ENCODE measurements at regions of chr12 and their contacts with region 1.

Region 1: DNA sequence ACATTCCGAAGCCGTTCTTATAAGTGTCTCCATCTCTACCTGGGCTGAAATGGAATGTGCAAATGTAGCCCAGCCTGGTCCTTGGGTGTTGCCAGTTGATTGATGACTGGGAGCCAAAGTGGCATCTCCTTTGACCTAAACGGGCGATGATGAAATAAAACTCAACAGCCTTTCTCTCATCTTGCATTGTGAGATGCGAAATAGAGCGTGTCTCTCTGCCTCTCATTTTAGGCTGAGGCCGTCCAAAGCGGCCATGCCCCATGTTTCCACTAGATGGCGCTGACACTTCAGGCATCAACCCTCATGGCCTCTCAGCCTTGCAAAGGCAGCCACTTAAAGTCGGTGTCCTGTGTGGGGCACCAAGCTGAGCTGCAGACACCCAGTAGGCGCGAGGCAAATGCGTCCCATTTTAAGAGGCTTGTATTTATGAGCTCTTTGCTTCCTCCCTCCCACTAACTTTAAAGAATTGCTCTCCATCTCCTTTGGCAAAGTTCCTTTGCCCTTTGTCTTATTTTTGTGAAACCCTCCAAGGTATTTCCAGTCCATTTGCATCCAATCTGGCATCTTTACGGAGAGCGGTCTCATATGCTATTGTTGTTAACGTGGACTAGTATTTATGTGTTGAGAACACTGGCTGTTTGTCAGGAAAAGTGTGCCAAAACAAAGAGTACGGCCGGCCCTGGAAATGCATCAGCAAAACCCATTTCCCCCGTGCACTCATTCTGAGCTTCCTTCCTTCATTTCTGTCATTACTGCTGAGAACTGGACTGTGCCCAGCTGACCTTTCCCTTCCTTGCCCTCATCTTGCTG is 25.0 kb downstream of the GPRC5A start:
- DNase-seq: peak; percentile 72 to 87 (median 81)
- ATAC-seq: peak; percentile 99
- H3K4me3 ChIP-seq: no peak overlapping the region
- H3K4me3 Mint-ChIP-seq: peak overlapping the region in 7 of 10 donors; percentile 2 to 63 (median 40)
- H3K27ac ChIP-seq: no peak overlapping the region
- H3K27ac Mint-ChIP-seq: peak overlapping the region in 4 of 9 donors; percentile 6 to 55 (median 12)
- H3K4me1 ChIP-seq: peaks cover 0 to 3% of the 10 kb centered on the region in 2 donors
- H3K4me1 Mint-ChIP-seq: peaks cover 9 to 17% (median 11%) of the 10 kb centered on the region in 7 donors
- H3K27me3 ChIP-seq: no peaks in the 10 kb centered on the region
- H3K27me3 Mint-ChIP-seq: peaks cover 0 to 30% (median 10%) of the 10 kb centered on the region in 5 donors

Region 2: DNA sequence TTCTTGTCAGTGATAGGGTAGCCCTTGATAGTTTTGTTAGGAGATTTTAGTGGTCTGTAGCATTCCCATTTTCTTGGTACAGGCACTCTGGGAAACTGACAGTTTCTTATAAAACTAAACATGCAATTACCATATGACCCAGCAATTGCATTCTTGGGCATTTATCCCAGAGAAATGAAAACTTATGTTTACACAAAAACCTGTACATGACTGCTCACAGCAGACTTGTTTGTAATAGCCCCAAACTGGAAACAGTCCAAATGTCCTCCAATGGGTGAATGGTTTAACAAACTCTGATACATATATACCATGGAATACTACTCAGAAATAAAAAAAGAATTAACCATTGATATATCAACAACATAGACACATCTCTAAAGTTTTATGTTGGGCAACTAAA is 484.0 kb before region 1 on chr12:
- CTCF ChIA-PET with region 1: no interaction called
- POLR2A ChIA-PET with region 1: no interaction called
- intact Hi-C with region 1: no loop called
- DNase-seq: no peak
- ATAC-seq: no peak
- H3K4me3 ChIP-seq: no peak overlapping the region
- H3K4me3 Mint-ChIP-seq: no peak overlapping the region
- H3K27ac ChIP-seq: no peak overlapping the region
- H3K27ac Mint-ChIP-seq: peak overlapping the region in 3 of 9 donors; percentile 22 to 76 (median 65)
- H3K4me1 ChIP-seq: peaks cover 0 to 8% of the 10 kb centered on the region in 2 donors
- H3K4me1 Mint-ChIP-seq: peaks cover 10 to 35% (median 17%) of the 10 kb centered on the region in 7 donors
- H3K27me3 ChIP-seq: no peaks in the 10 kb centered on the region
- H3K27me3 Mint-ChIP-seq: no peaks in the 10 kb centered on the region

Region 3: DNA sequence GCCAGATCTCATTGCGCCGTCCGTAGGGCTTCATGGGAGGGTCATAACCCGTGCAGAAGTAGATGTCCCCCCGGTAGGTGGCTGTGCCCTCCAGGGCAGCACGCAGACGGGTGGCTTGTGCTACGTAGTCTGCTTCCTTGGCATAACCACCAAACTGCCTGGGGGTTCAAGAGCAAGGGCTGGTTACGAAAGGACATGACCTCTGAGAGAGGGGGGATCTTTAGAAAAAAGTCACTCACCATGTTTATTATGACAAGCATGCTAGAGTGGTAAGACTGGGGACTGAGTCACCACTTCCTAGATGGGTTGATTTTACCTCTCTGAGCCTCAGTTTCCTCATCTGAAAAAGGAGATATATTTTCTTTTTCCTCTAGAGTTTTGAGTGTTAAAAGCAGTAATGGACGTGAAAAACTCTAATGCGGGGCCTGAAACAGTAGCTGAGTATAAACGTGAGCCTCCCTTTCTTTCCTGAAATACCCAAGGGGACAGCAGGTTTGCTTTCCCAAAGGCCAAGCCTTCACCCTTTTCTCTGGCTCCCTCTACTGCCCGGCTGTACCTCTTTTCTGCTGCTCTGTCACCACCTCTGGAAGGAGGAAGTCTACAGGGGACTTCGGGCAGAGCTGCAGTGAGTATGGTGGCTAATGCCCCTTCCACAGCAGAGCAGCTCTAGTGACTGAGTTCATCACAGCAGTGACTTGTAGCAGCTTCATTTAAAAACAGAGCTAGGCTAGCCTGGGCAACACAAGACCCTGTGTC is 59.2 kb after region 1 on chr12:
- CTCF ChIA-PET with region 1: interaction called, 5 read pairs
- POLR2A ChIA-PET with region 1: no interaction called
- intact Hi-C with region 1: loop called in 1 of 2 experiments (anchors 2 kb)
- DNase-seq: no peak
- ATAC-seq: peak; percentile 46
- H3K4me3 ChIP-seq: no peak overlapping the region
- H3K4me3 Mint-ChIP-seq: no peak overlapping the region
- H3K27ac ChIP-seq: no peak overlapping the region
- H3K27ac Mint-ChIP-seq: peak overlapping the region in 1 of 9 donors; percentile 12
- H3K4me1 ChIP-seq: no peaks in the 10 kb centered on the region
- H3K4me1 Mint-ChIP-seq: peaks cover 0 to 3% (median 0%) of the 10 kb centered on the region in 7 donors
- H3K27me3 ChIP-seq: no peaks in the 10 kb centered on the region
- H3K27me3 Mint-ChIP-seq: no peaks in the 10 kb centered on the region

Region 4: DNA sequence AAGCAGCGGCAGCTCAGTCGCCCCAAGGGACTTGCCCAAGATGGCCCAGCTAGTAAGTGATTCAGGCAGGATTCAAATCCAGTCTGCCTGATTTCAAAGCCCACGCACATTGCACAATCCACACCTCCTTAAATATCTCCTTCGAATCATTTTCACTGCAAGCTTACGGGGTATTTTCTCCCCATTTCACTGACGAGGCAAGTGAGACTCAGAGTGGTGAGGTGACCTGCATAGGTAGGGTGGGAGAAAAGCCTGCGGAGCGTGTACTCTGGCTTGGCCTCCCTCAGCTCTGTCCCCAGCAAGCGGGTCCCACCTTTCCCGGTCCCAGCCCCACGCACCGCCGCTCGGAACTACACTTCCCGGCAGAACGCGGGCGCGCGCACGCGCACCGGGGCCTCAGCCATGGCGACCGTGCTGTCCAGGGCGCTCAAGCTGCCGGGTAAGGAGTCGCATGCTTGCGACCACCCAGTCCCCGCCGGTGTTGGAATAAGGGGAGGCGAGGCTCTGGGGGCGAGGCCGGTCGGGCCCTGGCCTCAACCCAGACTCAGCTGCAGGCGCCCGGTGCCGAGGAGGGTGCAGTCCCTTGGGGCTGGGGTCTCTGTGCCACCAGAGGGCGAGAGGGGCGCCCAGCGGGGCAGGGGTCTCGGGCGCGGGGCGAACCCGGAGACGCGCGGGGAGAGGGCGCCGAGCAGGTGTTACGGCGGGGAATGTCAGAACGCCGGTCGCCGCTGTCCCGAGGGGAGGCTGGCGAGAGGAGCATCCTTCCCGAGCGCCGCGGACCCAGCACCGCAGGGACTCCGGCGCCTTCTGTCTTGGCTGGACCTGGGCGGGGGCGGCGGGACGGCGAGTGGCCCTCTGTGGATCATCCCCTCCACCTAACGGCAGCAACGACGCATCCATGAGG is 127.9 kb after region 1 on chr12 and contains the start of gene FAM234B:
- CTCF ChIA-PET with region 1: no interaction called
- POLR2A ChIA-PET with region 1: no interaction called
- intact Hi-C with region 1: loop called in 1 of 2 experiments (anchors 2 kb)
- DNase-seq: peak; percentile 41 to 77 (median 66)
- ATAC-seq: peak; percentile 95
- H3K4me3 ChIP-seq: peak within 1 kb of the TSS; percentile 89
- H3K4me3 Mint-ChIP-seq: peak within 1 kb of the TSS; percentile 76 to 91 (median 87)
- H3K27ac ChIP-seq: peak within 1 kb of the TSS; percentile 79
- H3K27ac Mint-ChIP-seq: peak within 1 kb of the TSS in 7 of 9 donors; percentile 31 to 79 (median 66)
- H3K4me1 ChIP-seq: peaks cover 0 to 5% of the 10 kb centered on the region in 2 donors
- H3K4me1 Mint-ChIP-seq: peaks cover 5 to 20% (median 14%) of the 10 kb centered on the region in 7 donors
- H3K27me3 ChIP-seq: no peaks in the 10 kb centered on the region
- H3K27me3 Mint-ChIP-seq: peaks cover 0 to 32% (median 5%) of the 10 kb centered on the region in 5 donors
- total RNA-seq, gene FAM234B: 2.7 to 5.8 (median 4.3) TPM

Region 5: GRCh38 chr12:13211859-13212664 is 295.7 kb after region 1 on chr12:
- CTCF ChIA-PET with region 1: interaction called, 37 read pairs
- POLR2A ChIA-PET with region 1: interaction called, 3 read pairs
- intact Hi-C with region 1: loop called (anchors 1 kb)
- DNase-seq: peak; percentile 29 to 81 (median 73)
- ATAC-seq: peak; percentile 87
- H3K4me3 ChIP-seq: no peak overlapping the region
- H3K4me3 Mint-ChIP-seq: peak overlapping the region in 1 of 10 donors; percentile 55
- H3K27ac ChIP-seq: no peak overlapping the region
- H3K27ac Mint-ChIP-seq: peak overlapping the region in 3 of 9 donors; percentile 19 to 76 (median 70)
- H3K4me1 ChIP-seq: no peaks in the 10 kb centered on the region
- H3K4me1 Mint-ChIP-seq: peaks cover 5 to 29% (median 7%) of the 10 kb centered on the region in 7 donors
- H3K27me3 ChIP-seq: no peaks in the 10 kb centered on the region
- H3K27me3 Mint-ChIP-seq: peaks cover 0 to 13% (median 0%) of the 10 kb centered on the region in 5 donors

Region 6: GRCh38 chr12:13316587-13317246 is 400.4 kb after region 1 on chr12:
- CTCF ChIA-PET with region 1: no interaction called
- POLR2A ChIA-PET with region 1: no interaction called
- intact Hi-C with region 1: no loop called
- DNase-seq: no peak
- ATAC-seq: no peak
- H3K4me3 ChIP-seq: no peak overlapping the region
- H3K4me3 Mint-ChIP-seq: no peak overlapping the region
- H3K27ac ChIP-seq: no peak overlapping the region
- H3K27ac Mint-ChIP-seq: no peak overlapping the region
- H3K4me1 ChIP-seq: no peaks in the 10 kb centered on the region
- H3K4me1 Mint-ChIP-seq: peaks cover 0 to 4% (median 0%) of the 10 kb centered on the region in 7 donors
- H3K27me3 ChIP-seq: no peaks in the 10 kb centered on the region
- H3K27me3 Mint-ChIP-seq: peaks cover 4 to 41% (median 27%) of the 10 kb centered on the region in 5 donors